ENCODE measurements at regions of chr2 and their contacts with region 1.

Region 1: GRCh38 chr2:72887754-72888437 is 688 bp downstream of the SPR start:
- DNase-seq: peak; percentile 63
- ATAC-seq: peak; percentile 50
- H3K4me3 Mint-ChIP-seq: peak overlapping the region; percentile 65
- H3K27ac Mint-ChIP-seq: no peak overlapping the region
- H3K4me1 Mint-ChIP-seq: peaks cover 2% of the 10 kb centered on the region
- H3K27me3 Mint-ChIP-seq: peaks cover 39% of the 10 kb centered on the region

Region 2: GRCh38 chr2:72924353-72925240 is 36.7 kb after region 1 on chr2:
- CTCF ChIA-PET with region 1: interaction called, 34 read pairs
- POLR2A ChIA-PET with region 1: no interaction called
- DNase-seq: peak; percentile 55
- ATAC-seq: no peak
- H3K4me3 Mint-ChIP-seq: no peak overlapping the region
- H3K27ac Mint-ChIP-seq: no peak overlapping the region
- H3K4me1 Mint-ChIP-seq: peaks cover 20% of the 10 kb centered on the region
- H3K27me3 Mint-ChIP-seq: peaks cover 50% of the 10 kb centered on the region

Region 3: GRCh38 chr2:72973566-72974435 is 85.9 kb after region 1 on chr2:
- CTCF ChIA-PET with region 1: interaction called, 251 read pairs
- POLR2A ChIA-PET with region 1: interaction called, 4 read pairs
- DNase-seq: peak; percentile 62
- ATAC-seq: peak; percentile 89
- H3K4me3 Mint-ChIP-seq: no peak overlapping the region
- H3K27ac Mint-ChIP-seq: no peak overlapping the region
- H3K4me1 Mint-ChIP-seq: peaks cover 6% of the 10 kb centered on the region
- H3K27me3 Mint-ChIP-seq: peaks cover 2% of the 10 kb centered on the region

Region 4: DNA sequence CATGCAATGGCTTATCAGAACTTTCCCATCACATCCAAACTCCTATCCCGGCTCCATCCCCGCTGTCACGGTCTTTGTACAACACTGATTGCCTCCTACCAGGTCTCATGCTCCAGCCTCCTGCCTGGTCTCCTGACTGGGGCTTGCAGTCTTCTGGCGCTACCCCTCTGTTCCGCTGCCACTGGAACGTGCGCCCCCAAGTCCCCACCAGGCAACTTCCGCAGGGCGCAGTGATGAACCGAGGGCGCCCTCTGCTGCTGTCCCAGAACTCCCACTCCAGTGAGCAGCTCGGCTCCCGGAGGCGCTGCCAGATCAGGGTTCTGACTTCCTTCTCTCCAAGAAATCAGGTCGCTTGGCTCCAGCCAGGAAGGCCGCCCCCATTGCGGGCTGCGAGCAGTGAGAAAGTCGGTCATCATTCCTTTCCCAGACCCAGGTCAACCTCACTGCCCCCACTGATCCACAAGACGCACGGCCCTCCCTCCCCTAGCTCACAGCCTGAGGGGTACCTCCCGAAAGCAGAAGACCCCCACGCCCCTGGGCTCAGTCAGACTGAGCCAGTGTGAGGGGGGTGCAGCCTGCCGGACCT is 268.7 kb after region 1 on chr2:
- CTCF ChIA-PET with region 1: interaction called, 12 read pairs
- POLR2A ChIA-PET with region 1: no interaction called
- DNase-seq: peak; percentile 52
- ATAC-seq: peak; percentile 72
- H3K4me3 Mint-ChIP-seq: no peak overlapping the region
- H3K27ac Mint-ChIP-seq: no peak overlapping the region
- H3K4me1 Mint-ChIP-seq: peaks cover 4% of the 10 kb centered on the region
- H3K27me3 Mint-ChIP-seq: peaks cover 39% of the 10 kb centered on the region

Region 5: DNA sequence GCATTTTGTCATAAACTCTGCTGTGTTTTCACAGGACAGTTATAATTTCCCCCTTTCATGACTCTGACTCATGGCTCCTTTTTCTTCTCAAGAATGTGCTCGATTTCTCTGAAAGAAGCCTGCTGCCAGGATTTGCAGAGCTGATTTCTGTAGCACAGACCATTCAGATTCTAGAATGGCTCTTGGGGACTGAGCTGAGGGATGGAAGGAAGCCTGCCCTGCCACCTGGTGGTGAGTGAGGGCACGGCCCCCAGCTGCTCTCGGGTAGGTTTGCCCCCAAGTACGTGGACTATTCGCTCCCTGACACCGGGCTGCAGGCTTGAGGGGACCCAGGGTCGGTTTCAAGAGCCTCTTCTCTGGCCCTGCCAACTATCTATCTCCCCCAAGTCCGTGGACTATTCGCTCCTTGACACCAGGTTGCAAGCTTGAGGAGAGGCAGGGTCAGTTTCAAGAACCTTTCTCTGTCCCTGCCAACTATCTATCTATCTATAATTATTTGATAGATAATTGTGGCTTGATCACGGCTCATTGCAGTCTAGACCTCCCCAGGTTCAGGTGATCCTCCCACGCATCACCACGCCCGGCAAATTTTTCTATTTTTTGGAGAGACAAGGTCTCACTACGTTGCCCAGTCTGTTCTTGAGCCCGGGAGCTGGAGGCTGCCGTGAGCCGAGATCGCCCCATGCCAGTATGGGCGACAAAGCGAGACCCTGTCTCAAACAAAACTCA is 324.7 kb after region 1 on chr2:
- CTCF ChIA-PET with region 1: interaction called, 19 read pairs
- POLR2A ChIA-PET with region 1: no interaction called
- DNase-seq: peak; percentile 83
- ATAC-seq: peak; percentile 73
- H3K4me3 Mint-ChIP-seq: peak overlapping the region; percentile 14
- H3K27ac Mint-ChIP-seq: no peak overlapping the region
- H3K4me1 Mint-ChIP-seq: peaks cover 28% of the 10 kb centered on the region
- H3K27me3 Mint-ChIP-seq: peaks cover 10% of the 10 kb centered on the region